ENCODE measurements at regions of chr16 and their contacts with region 1.

Region 1: DNA sequence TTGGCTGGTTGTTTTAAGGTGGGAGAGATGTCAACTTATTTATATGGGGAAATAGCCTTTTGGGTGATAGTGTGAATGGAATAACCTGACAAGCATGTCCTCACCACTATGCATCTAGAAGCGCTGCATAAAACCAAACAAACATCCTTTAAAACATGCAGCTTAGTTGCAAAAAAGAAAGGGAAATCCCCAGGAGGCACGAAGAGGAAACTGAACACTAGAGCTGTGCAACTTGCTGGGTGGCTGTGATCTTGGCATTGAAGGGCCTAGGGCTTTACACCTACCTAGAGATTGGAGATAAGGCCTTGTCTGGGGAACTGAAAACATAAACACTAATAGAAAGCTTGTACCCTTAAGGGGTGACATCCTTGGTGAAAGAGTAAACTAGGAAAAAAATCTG is 7.3 kb downstream of the C16orf54 start:
- DNase-seq: no peak
- ATAC-seq: no peak
- H3K4me3 ChIP-seq: no peak overlapping the region
- H3K27ac ChIP-seq: no peak overlapping the region
- H3K4me1 ChIP-seq: no peaks in the 10 kb centered on the region
- H3K27me3 ChIP-seq: no peaks in the 10 kb centered on the region
- CTCF ChIP-seq: no peak
- POLR2A ChIP-seq: no peak

Region 2: GRCh38 chr16:29645694-29646187 is 92.8 kb before region 1 on chr16:
- in situ Hi-C with region 1: loop called in 1 of 4 experiments (anchors 10 kb)
- intact Hi-C with region 1: no loop called
- DNase-seq: no peak
- ATAC-seq: no peak
- H3K4me3 ChIP-seq: no peak overlapping the region
- H3K27ac ChIP-seq: no peak overlapping the region
- H3K4me1 ChIP-seq: no peaks in the 10 kb centered on the region
- H3K27me3 ChIP-seq: no peaks in the 10 kb centered on the region
- CTCF ChIP-seq: no peak
- POLR2A ChIP-seq: no peak

Region 3: GRCh38 chr16:29915590-29916247 is 177.2 kb after region 1 on chr16:
- in situ Hi-C with region 1: no loop called
- intact Hi-C with region 1: no loop called
- DNase-seq: no peak
- ATAC-seq: no peak
- H3K4me3 ChIP-seq: no peak overlapping the region
- H3K27ac ChIP-seq: no peak overlapping the region
- H3K4me1 ChIP-seq: no peaks in the 10 kb centered on the region
- H3K27me3 ChIP-seq: no peaks in the 10 kb centered on the region
- CTCF ChIP-seq: no peak
- POLR2A ChIP-seq: no peak